ENCODE measurements at regions of chr3 and their contacts with region 1.

Region 1: GRCh38 chr3:186930641-186931531 is 560 bp downstream of the ST6GAL1 start:
- DNase-seq: peak; percentile 79
- ATAC-seq: peak; percentile 80
- H3K4me3 Mint-ChIP-seq: peak overlapping the region; percentile 90
- H3K27ac Mint-ChIP-seq: peak overlapping the region; percentile 96
- H3K4me1 Mint-ChIP-seq: peaks cover 35% of the 10 kb centered on the region
- H3K27me3 Mint-ChIP-seq: no peaks in the 10 kb centered on the region

Region 2: DNA sequence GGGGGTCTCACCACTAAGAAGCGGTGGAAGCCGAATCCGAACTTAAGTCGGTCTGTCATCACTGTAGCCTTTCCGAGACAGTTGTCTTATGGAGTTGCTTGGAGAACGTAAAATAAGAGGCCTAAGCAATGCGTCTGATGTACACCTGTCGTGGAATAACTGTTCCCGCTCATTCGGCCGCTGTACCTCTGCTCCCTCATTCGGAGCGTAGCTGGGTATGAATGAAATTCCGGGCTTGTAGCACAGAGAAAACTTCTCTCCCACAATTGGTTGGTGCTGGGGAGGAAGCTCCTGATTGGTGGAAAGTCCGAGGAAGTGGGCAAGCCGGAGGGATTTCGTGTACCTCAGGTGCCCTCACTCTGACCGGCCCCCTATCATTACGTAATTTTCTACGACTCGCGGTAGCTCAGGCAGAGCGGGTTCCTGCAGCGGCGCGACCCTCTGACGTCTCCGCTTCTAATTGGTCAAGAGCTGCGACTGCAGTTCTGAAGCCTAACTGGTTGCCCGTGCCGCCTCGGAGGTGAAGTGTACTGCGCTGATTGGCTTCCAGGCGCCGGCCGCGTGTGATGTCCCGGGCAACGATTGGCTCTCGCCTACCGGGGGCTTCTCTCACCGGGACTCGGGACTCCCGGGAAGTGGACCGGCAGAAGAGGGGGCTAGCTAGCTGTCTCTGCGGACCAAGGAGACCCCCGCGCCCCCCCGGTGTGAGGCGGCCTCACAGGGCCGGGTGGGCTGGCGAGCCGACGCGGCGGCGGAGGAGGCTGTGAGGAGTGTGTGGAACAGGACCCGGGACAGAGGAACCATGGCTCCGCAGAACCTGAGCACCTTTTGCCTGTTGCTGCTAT is 360.6 kb before region 1 on chr3 and contains the start of gene DNAJB11:
- CTCF ChIA-PET with region 1: no interaction called
- POLR2A ChIA-PET with region 1: no interaction called
- intact Hi-C with region 1: loop called in 1 of 2 experiments (anchors 5 kb)
- DNase-seq: peak; percentile 100
- ATAC-seq: peak; percentile 92
- H3K4me3 Mint-ChIP-seq: peak within 1 kb of the TSS; percentile 93
- H3K27ac Mint-ChIP-seq: peak within 1 kb of the TSS; percentile 95
- H3K4me1 Mint-ChIP-seq: peaks cover 50% of the 10 kb centered on the region
- H3K27me3 Mint-ChIP-seq: no peaks in the 10 kb centered on the region
- total RNA-seq, gene DNAJB11: 30.9 to 36.6 TPM

Region 3: DNA sequence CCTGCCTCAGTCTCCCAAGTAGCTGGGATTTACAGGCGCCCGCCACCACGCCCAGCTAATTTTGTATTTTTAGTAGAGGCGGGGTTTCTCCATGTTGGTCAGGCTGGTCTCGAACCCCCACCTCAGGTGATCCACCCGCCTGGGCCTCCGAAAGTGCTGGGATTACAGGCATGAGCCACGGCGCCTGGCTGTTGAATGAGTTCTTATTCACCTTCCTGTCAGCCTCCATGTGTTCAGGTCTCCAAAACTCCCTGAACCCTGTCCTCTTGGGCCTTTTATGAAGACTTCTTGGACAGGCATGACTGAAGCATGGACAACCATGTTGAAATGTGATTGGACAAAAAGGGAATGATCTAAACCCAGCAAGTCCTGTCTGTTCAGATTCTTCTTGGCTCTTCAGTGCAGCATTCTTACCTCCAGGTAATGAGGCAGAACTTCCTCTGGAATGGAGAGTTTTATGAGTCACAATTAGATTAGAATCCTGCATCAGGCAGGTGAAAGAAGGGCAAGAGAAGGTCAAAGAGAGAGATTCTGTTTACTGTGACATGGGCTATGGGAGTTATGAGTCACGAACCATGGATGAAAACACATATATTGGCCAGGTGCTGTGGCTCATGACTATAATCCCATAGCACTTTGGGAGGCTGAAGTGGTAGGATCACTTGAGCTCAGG is 170.6 kb before region 1 on chr3:
- CTCF ChIA-PET with region 1: no interaction called
- POLR2A ChIA-PET with region 1: no interaction called
- intact Hi-C with region 1: no loop called
- DNase-seq: no peak
- ATAC-seq: peak; percentile 39
- H3K4me3 Mint-ChIP-seq: no peak overlapping the region
- H3K27ac Mint-ChIP-seq: no peak overlapping the region
- H3K4me1 Mint-ChIP-seq: peaks cover 4% of the 10 kb centered on the region
- H3K27me3 Mint-ChIP-seq: peaks cover 2% of the 10 kb centered on the region

Region 4: DNA sequence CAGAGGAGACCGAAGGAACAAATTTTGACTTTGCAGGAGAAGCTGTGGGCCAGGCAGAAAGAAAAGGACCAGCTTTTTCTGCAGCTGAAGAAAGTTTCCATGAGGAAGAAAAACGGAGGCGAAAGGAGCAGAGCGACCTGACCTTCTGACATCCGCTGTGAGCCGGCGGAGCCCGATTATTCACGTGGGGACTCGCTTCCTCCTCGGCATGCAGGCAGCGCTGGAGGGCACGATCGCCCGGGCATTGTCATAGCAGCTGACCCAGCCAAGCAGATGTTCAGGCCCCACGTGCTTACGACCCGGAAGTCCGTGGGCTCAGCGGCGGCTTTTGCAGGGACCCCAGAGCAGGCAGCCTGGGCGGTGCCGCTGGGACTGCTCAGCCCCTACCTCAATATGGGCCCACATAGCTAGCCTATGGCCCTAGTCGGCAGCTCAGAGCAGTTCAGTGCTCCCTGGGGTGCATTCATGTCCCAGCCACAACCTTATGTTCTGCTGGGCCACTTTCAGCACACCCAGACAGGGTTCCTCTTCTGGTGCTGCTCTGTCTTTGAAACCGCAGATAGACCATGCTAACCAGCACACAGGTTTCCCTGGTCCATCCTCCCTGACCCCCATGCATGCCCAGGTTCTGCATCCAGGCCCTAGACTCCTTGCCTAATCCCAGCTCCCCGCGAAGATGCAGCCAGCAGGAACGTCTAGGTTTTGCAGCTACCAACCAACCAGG is 158.0 kb before region 1 on chr3:
- CTCF ChIA-PET with region 1: no interaction called
- POLR2A ChIA-PET with region 1: no interaction called
- intact Hi-C with region 1: no loop called
- DNase-seq: peak; percentile 84
- ATAC-seq: peak; percentile 93
- H3K4me3 Mint-ChIP-seq: peak overlapping the region; percentile 86
- H3K27ac Mint-ChIP-seq: peak overlapping the region; percentile 98
- H3K4me1 Mint-ChIP-seq: peaks cover 16% of the 10 kb centered on the region
- H3K27me3 Mint-ChIP-seq: no peaks in the 10 kb centered on the region

Region 5: GRCh38 chr3:186810336-186810996 is 120.4 kb before region 1 on chr3:
- CTCF ChIA-PET with region 1: no interaction called
- POLR2A ChIA-PET with region 1: no interaction called
- intact Hi-C with region 1: no loop called
- DNase-seq: no peak
- ATAC-seq: no peak
- H3K4me3 Mint-ChIP-seq: no peak overlapping the region
- H3K27ac Mint-ChIP-seq: no peak overlapping the region
- H3K4me1 Mint-ChIP-seq: peaks cover 10% of the 10 kb centered on the region
- H3K27me3 Mint-ChIP-seq: no peaks in the 10 kb centered on the region

Region 6: DNA sequence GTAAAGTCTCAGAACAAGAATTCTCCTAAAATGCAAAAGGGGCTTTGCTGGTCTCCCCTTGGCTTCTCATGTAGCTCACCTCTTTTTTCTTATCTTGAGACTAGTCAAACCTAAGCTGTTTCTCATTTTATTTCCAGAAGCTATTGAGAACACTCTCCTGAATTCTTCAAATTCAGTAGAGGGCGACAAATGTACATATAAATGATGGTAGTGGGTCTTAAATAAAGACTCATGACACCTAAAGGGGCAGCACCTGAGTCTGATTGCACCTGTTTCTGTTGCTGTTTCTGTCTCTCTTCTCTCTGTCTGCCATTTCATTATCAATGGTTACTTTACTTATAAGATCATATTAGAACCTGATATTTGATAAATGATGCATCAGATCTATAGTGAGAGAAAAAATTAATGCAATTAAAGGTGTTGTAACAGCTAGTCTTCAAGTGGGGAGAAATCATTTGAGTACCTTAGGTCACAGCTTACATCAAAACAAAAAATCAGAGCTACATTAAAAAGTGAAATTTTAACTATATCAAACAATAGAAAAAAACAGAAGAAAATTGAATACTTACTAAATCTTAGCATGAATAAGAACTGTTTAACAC is 81.4 kb before region 1 on chr3:
- CTCF ChIA-PET with region 1: interaction called, 48 read pairs
- POLR2A ChIA-PET with region 1: interaction called, 3 read pairs
- intact Hi-C with region 1: loop called (anchors 1 to 2 kb)
- DNase-seq: peak; percentile 32
- ATAC-seq: peak; percentile 90
- H3K4me3 Mint-ChIP-seq: no peak overlapping the region
- H3K27ac Mint-ChIP-seq: peak overlapping the region; percentile 52
- H3K4me1 Mint-ChIP-seq: peaks cover 18% of the 10 kb centered on the region
- H3K27me3 Mint-ChIP-seq: peaks cover 7% of the 10 kb centered on the region

Region 7: DNA sequence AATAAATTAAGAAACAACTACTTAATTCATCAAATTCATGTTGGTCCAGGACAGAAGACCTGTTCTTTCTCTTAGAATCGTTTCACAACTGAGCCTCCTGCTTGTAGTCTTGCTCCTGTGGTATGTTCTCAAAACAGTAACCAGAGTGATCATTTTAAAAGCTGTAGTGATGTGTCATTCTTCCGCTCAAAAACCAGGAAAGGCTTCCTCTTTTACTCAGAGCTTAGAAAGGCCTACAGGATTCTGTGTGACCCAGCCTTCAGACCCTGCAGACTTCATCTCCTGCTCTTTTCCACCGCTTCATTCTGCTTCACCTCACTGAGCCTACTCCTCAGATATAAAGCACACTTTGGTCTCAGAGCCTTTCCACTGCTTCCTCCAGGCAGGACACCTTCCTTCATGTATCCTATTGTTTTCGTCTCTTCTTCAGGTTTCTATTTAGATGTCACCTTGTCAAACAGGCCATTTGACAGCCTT is 22.2 kb after region 1 on chr3:
- CTCF ChIA-PET with region 1: interaction called, 3 read pairs
- POLR2A ChIA-PET with region 1: interaction called, 5 read pairs
- intact Hi-C with region 1: loop called in 1 of 2 experiments (anchors 1 kb)
- DNase-seq: no peak
- ATAC-seq: peak; percentile 90
- H3K4me3 Mint-ChIP-seq: peak overlapping the region; percentile 10
- H3K27ac Mint-ChIP-seq: peak overlapping the region; percentile 81
- H3K4me1 Mint-ChIP-seq: peaks cover 73% of the 10 kb centered on the region
- H3K27me3 Mint-ChIP-seq: no peaks in the 10 kb centered on the region

Region 8: GRCh38 chr3:187006864-187007630 is 76.2 kb after region 1 on chr3:
- CTCF ChIA-PET with region 1: no interaction called
- POLR2A ChIA-PET with region 1: interaction called, 4 read pairs
- intact Hi-C with region 1: loop called in 1 of 2 experiments (anchors 2 kb)
- DNase-seq: no peak
- ATAC-seq: peak; percentile 81
- H3K4me3 Mint-ChIP-seq: no peak overlapping the region
- H3K27ac Mint-ChIP-seq: peak overlapping the region; percentile 67
- H3K4me1 Mint-ChIP-seq: peaks cover 55% of the 10 kb centered on the region
- H3K27me3 Mint-ChIP-seq: no peaks in the 10 kb centered on the region

Region 9: GRCh38 chr3:187041362-187042307 is 110.7 kb after region 1 on chr3:
- CTCF ChIA-PET with region 1: interaction called, 6 read pairs
- POLR2A ChIA-PET with region 1: no interaction called
- intact Hi-C with region 1: loop called (anchors 5 kb)
- DNase-seq: peak; percentile 61
- ATAC-seq: peak; percentile 92
- H3K4me3 Mint-ChIP-seq: peak overlapping the region; percentile 40
- H3K27ac Mint-ChIP-seq: peak overlapping the region; percentile 95
- H3K4me1 Mint-ChIP-seq: peaks cover 81% of the 10 kb centered on the region
- H3K27me3 Mint-ChIP-seq: no peaks in the 10 kb centered on the region

Measured in activated CD4-positive, alpha-beta T cell treated with anti-CD3 and anti-CD28 coated beads for 36 hours (primary cell).